ENCODE measurements at regions of chr13 and their contacts with region 1.

Region 1: DNA sequence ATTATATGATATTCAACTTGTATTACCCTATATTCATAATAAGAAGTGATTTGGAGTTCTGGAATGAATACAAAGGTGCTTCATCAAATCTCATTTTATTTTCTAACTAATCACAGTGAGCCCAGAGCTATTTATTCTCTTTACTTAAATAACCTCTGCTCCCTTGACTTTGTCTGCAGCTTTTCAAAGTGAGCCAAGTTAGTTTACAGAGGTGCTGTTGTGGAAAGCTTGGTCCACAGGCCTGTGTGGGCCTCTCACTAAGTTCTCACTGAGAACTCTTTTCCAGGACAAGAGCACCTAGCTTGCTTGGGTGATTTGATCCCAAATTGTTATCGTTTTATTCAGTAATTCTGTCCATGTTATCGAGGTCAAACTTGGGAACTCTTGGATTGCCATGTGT is 319.3 kb downstream of the RFC3 start:
- DNase-seq: no peak
- H3K4me3 ChIP-seq: no peak overlapping the region
- H3K27ac ChIP-seq: no peak overlapping the region
- H3K4me1 ChIP-seq: no peaks in the 10 kb centered on the region
- H3K27me3 ChIP-seq: no peaks in the 10 kb centered on the region
- CTCF ChIP-seq: no peak
- EP300 ChIP-seq: no peak
- POLR2A ChIP-seq: no peak

Region 2: GRCh38 chr13:34064456-34065205 is 72.6 kb before region 1 on chr13:
- in situ Hi-C with region 1: no loop called
- intact Hi-C with region 1: loop called (anchors 2 kb)
- DNase-seq: no peak
- H3K4me3 ChIP-seq: no peak overlapping the region
- H3K27ac ChIP-seq: no peak overlapping the region
- H3K4me1 ChIP-seq: no peaks in the 10 kb centered on the region
- H3K27me3 ChIP-seq: no peaks in the 10 kb centered on the region
- CTCF ChIP-seq: no peak
- EP300 ChIP-seq: no peak
- POLR2A ChIP-seq: no peak

Region 3: DNA sequence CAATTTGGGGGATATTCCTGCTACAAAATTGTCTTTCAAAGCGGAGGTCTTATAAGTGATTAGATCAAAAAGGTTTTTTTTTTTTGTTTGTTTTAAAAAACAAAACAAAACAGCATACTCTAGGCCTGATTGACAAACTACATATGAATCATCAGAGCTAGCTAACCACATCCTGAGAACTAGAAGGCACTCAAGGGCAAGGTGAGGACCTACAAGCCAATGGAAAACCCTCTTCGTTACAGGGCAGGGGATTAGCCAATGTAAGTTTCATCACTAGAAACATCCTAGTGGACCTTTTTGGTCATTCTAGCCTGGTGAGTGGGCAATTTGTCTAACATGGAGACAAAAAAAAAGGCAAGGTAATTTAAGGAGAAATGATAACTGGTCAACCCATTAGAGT is 109.3 kb after region 1 on chr13:
- in situ Hi-C with region 1: no loop called
- intact Hi-C with region 1: no loop called
- DNase-seq: no peak
- H3K4me3 ChIP-seq: no peak overlapping the region
- H3K27ac ChIP-seq: no peak overlapping the region
- H3K4me1 ChIP-seq: peaks cover 0 to 6% (median 0%) of the 10 kb centered on the region in 4 donors
- H3K27me3 ChIP-seq: no peaks in the 10 kb centered on the region
- CTCF ChIP-seq: no peak
- EP300 ChIP-seq: no peak
- POLR2A ChIP-seq: no peak